ENCODE measurements at regions of chr6 and their contacts with region 1.

Region 1: DNA sequence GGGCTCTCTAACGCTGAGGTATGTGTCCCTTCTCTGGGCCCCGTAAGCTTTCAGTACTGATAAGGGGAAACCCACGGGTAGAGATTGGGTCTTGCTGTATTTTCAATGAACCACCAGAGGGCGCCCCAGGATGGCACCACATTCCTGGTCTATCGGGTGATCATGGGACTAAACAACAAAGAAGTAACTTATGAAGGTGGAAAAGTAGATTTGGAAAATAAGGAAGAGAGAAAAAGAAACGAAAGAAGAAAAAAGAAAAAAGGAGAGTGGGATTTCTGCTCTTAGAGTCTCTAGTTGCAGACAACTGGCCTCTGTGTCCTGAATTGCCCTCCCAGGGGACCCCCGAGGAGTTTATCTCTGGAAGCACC is 93.8 kb downstream of the GMPR start:
- DNase-seq: peak; percentile 68 to 92 (median 76)
- ATAC-seq: peak; percentile 96
- H3K4me3 ChIP-seq: peak overlapping the region; percentile 10
- H3K4me3 Mint-ChIP-seq: no peak overlapping the region
- H3K27ac ChIP-seq: no peak overlapping the region
- H3K27ac Mint-ChIP-seq: no peak overlapping the region
- H3K4me1 ChIP-seq: peaks cover 17% of the 10 kb centered on the region
- H3K4me1 Mint-ChIP-seq: no peaks in the 10 kb centered on the region
- H3K27me3 ChIP-seq: no peaks in the 10 kb centered on the region
- H3K27me3 Mint-ChIP-seq: no peaks in the 10 kb centered on the region
- CTCF ChIP-seq: peak; percentile 90

Region 2: DNA sequence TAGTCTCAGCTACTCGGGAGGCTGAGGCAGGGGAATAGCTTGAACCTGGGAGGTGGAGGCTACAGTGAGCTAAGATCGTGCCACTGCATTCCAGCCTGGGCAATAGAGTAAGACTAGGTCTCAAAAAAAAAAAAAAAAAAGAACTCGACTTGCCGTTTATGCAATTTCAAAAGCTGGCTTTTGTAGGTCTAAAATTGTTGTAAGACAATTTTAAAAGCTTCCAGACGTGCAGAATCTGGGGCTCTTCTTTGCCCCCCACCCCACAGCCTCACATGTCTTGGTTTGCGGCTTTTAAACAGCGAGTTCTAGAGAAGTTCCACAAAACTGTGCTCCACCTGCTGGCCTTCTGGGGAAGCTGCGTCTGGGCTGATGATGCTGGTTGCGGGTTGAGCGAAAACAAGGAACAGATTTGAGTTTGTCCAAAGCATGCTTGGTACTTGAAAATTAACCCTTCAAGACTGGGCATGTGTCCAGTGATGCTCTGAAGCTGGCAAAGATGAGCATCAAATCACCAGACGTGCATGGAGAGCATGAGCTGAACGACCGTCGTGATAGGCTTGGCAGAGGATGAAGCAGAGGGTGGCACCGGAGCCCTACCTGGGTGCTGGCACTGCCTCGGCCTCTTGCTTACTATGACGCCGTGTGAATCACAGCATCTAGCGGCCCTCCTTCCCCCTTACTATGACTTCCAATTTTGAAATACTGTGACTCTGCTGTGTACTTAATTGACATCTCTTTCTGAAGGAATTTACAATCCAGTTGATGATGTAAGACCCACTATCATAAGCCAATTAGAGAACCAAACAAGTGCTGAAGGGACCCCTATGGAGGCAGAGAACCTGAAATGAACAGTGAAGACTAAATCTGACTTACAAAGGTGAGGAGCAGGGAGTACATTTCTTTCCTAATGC is 77.6 kb after region 1 on chr6:
- CTCF ChIA-PET with region 1: interaction called, 6 read pairs
- POLR2A ChIA-PET with region 1: no interaction called
- intact Hi-C with region 1: loop called (anchors 5 kb)
- DNase-seq: peak in 13 of 14 experiments; percentile 25 to 77 (median 50)
- ATAC-seq: peak; percentile 59
- H3K4me3 ChIP-seq: no peak overlapping the region
- H3K4me3 Mint-ChIP-seq: peak overlapping the region; percentile 1
- H3K27ac ChIP-seq: no peak overlapping the region
- H3K27ac Mint-ChIP-seq: peak overlapping the region; percentile 42
- H3K4me1 ChIP-seq: peaks cover 7% of the 10 kb centered on the region
- H3K4me1 Mint-ChIP-seq: peaks cover 36% of the 10 kb centered on the region
- H3K27me3 ChIP-seq: no peaks in the 10 kb centered on the region
- H3K27me3 Mint-ChIP-seq: no peaks in the 10 kb centered on the region
- CTCF ChIP-seq: peak; percentile 64

Region 3: GRCh38 chr6:16514249-16514648 is 182.1 kb after region 1 on chr6:
- CTCF ChIA-PET with region 1: interaction called, 8 read pairs
- POLR2A ChIA-PET with region 1: no interaction called
- intact Hi-C with region 1: loop called (anchors 5 kb)
- DNase-seq: peak in 5 of 14 experiments; percentile 7 to 67 (median 59)
- ATAC-seq: peak; percentile 58
- H3K4me3 ChIP-seq: no peak overlapping the region
- H3K4me3 Mint-ChIP-seq: peak overlapping the region; percentile 5
- H3K27ac ChIP-seq: no peak overlapping the region
- H3K27ac Mint-ChIP-seq: peak overlapping the region; percentile 73
- H3K4me1 ChIP-seq: peaks cover 32% of the 10 kb centered on the region
- H3K4me1 Mint-ChIP-seq: peaks cover 54% of the 10 kb centered on the region
- H3K27me3 ChIP-seq: no peaks in the 10 kb centered on the region
- H3K27me3 Mint-ChIP-seq: no peaks in the 10 kb centered on the region
- CTCF ChIP-seq: peak; percentile 44

Region 4: GRCh38 chr6:16964553-16965501 is 632.7 kb after region 1 on chr6:
- CTCF ChIA-PET with region 1: no interaction called
- POLR2A ChIA-PET with region 1: no interaction called
- intact Hi-C with region 1: loop called (anchors 1 to 5 kb)
- DNase-seq: peak; percentile 28 to 77 (median 47)
- ATAC-seq: peak; percentile 94
- H3K4me3 ChIP-seq: no peak overlapping the region
- H3K4me3 Mint-ChIP-seq: no peak overlapping the region
- H3K27ac ChIP-seq: no peak overlapping the region
- H3K27ac Mint-ChIP-seq: no peak overlapping the region
- H3K4me1 ChIP-seq: peaks cover 5% of the 10 kb centered on the region
- H3K4me1 Mint-ChIP-seq: peaks cover 5% of the 10 kb centered on the region
- H3K27me3 ChIP-seq: peaks cover 3 to 5% of the 10 kb centered on the region in 2 experiments
- H3K27me3 Mint-ChIP-seq: peaks cover 7% of the 10 kb centered on the region
- CTCF ChIP-seq: peak; percentile 66

Measured in CD4-positive, alpha-beta T cell (primary cell).